ENCODE measurements at regions of chr7 and their contacts with region 1.

Region 1: DNA sequence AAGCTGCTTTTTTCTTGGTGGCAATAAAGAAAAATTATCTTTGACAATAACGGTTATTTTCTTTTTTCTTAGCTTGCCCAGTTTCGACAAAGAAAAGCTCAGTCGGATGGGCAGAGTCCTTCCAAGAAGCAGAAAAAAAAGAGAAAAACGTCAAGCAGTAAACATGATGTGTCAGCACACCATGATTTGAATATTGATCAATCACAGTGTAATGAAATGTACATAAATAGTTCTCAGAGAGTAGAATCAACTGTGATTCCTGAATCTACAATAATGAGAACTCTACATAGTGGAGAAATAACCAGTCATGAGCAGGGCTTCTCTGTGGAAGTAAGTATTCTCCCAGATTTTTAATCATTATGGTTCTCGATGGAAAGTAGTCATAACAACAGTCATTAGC is 33.0 kb downstream of the AKAP9 start:
- DNase-seq: no peak
- ATAC-seq: no peak
- H3K4me3 ChIP-seq: no peak overlapping the region
- H3K4me3 Mint-ChIP-seq: no peak overlapping the region
- H3K27ac ChIP-seq: no peak overlapping the region
- H3K27ac Mint-ChIP-seq: no peak overlapping the region
- H3K4me1 ChIP-seq: peaks cover 0 to 4% of the 10 kb centered on the region in 2 experiments
- H3K4me1 Mint-ChIP-seq: peaks cover 29 to 43% (median 31%) of the 10 kb centered on the region in 3 donors
- H3K27me3 ChIP-seq: no peaks in the 10 kb centered on the region
- H3K27me3 Mint-ChIP-seq: no peaks in the 10 kb centered on the region

Region 2: DNA sequence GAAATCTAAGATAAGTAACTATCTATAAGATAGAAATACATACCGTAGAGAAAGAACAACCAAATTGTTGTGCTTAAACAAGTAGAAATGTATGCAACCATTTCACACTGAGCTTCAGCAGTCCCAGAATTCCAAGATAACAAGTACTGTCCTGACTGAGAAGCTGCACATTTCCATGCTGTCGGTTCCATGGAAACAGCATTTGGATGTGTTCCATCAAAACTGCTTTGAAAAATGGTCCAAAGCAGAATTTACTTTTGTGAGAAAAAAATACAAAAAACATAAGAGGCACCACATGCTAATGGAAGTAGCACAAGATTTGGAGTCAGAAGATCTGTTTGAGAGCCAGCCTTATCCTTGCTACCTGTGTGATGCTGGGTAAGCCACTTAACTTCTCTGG is 185.7 kb before region 1 on chr7:
- CTCF ChIA-PET with region 1: no interaction called
- POLR2A ChIA-PET with region 1: no interaction called
- DNase-seq: no peak
- ATAC-seq: no peak
- H3K4me3 ChIP-seq: no peak overlapping the region
- H3K4me3 Mint-ChIP-seq: no peak overlapping the region
- H3K27ac ChIP-seq: no peak overlapping the region
- H3K27ac Mint-ChIP-seq: no peak overlapping the region
- H3K4me1 ChIP-seq: no peaks in the 10 kb centered on the region
- H3K4me1 Mint-ChIP-seq: no peaks in the 10 kb centered on the region
- H3K27me3 ChIP-seq: peaks cover 0 to 4% of the 10 kb centered on the region in 2 experiments
- H3K27me3 Mint-ChIP-seq: peaks cover 0 to 1% of the 10 kb centered on the region in 2 donors

Region 3: DNA sequence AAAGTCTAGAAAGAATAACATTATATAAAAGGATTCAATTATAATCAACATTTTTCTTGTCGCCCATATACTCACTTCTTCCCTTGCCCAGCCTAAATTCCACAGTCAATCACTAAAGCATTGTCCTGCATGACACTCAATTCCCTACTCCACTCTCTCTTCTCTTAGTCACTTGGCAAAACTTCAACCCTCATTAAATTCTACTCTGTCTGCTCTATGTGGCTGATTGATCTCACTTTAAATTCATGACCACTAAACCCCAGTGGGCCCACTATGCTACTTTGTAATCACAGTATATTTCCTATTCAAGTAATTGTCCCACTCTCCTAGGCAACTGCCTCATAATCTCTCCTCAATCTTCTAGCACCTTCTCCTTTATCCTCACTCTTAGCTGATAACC is 147.3 kb before region 1 on chr7:
- CTCF ChIA-PET with region 1: no interaction called
- POLR2A ChIA-PET with region 1: no interaction called
- DNase-seq: no peak
- ATAC-seq: no peak
- H3K4me3 ChIP-seq: no peak overlapping the region
- H3K4me3 Mint-ChIP-seq: no peak overlapping the region
- H3K27ac ChIP-seq: no peak overlapping the region
- H3K27ac Mint-ChIP-seq: no peak overlapping the region
- H3K4me1 ChIP-seq: no peaks in the 10 kb centered on the region
- H3K4me1 Mint-ChIP-seq: peaks cover 0 to 2% (median 0%) of the 10 kb centered on the region in 3 donors
- H3K27me3 ChIP-seq: no peaks in the 10 kb centered on the region
- H3K27me3 Mint-ChIP-seq: peaks cover 0 to 2% of the 10 kb centered on the region in 2 donors

Region 4: GRCh38 chr7:91988213-91988612 is 14.6 kb after region 1 on chr7:
- CTCF ChIA-PET with region 1: no interaction called
- POLR2A ChIA-PET with region 1: no interaction called
- DNase-seq: no peak
- ATAC-seq: no peak
- H3K4me3 ChIP-seq: no peak overlapping the region
- H3K4me3 Mint-ChIP-seq: no peak overlapping the region
- H3K27ac ChIP-seq: no peak overlapping the region
- H3K27ac Mint-ChIP-seq: no peak overlapping the region
- H3K4me1 ChIP-seq: no peaks in the 10 kb centered on the region
- H3K4me1 Mint-ChIP-seq: peaks cover 23 to 27% (median 23%) of the 10 kb centered on the region in 3 donors
- H3K27me3 ChIP-seq: no peaks in the 10 kb centered on the region
- H3K27me3 Mint-ChIP-seq: no peaks in the 10 kb centered on the region

Region 5: GRCh38 chr7:92567460-92567859 is 593.8 kb after region 1 on chr7:
- CTCF ChIA-PET with region 1: no interaction called
- POLR2A ChIA-PET with region 1: interaction called in 1 of 2 experiments, 15 read pairs
- DNase-seq: no peak
- ATAC-seq: no peak
- H3K4me3 ChIP-seq: no peak overlapping the region
- H3K4me3 Mint-ChIP-seq: no peak overlapping the region
- H3K27ac ChIP-seq: no peak overlapping the region
- H3K27ac Mint-ChIP-seq: no peak overlapping the region
- H3K4me1 ChIP-seq: no peaks in the 10 kb centered on the region
- H3K4me1 Mint-ChIP-seq: no peaks in the 10 kb centered on the region
- H3K27me3 ChIP-seq: no peaks in the 10 kb centered on the region
- H3K27me3 Mint-ChIP-seq: no peaks in the 10 kb centered on the region

Measured in T-cell (primary cell).